Psoas muscle (tissue), 8 donors: ENCODE measurements at regions of chr6 and their contacts with region 1.

Region 1: GRCh38 chr6:30672445-30673253 is at the start of gene DHX16:
- DNase-seq: peak; percentile 97
- ATAC-seq: peak; percentile 88 to 94 (median 90)
- H3K4me3 ChIP-seq: peak within 1 kb of the TSS; percentile 97
- H3K27ac ChIP-seq: peak within 1 kb of the TSS; percentile 78
- H3K4me1 ChIP-seq: peaks cover 13% of the 10 kb centered on the region
- H3K27me3 ChIP-seq: no peaks in the 10 kb centered on the region
- CTCF ChIP-seq: peak; percentile 85
- total RNA-seq, gene DHX16: 26.6 to 45.4 (median 35.7) TPM

Region 2: DNA sequence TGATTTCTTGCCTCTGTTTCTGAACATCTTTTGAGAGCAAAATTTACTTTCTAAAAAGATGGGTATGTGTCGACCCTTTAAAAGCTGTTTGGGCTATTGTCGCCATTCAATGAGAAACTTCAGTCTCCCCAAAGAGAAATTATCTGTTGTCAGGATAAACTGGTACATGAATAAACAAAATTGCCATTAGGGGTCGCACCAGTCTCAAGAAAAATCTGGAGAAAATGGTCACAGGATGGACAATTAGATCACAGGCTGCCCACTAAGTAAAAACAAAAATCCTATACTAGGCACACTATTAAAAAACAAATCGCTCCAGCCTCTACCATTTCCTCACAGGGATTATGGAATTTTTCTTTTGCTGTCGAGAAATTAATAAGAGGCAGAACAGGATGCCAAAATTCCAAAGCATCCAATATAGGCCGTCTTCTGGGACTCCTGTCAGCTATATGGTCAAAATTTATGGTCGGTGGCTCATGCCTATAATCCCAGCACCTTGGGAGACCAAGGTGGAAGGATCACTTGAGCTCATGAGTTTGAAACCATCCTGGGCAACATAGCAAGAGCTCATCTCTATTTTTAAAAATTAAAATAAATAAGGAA is 188.9 kb before region 1 on chr6:
- intact Hi-C with region 1: loop called in 1 of 2 experiments (anchors 5 kb)
- DNase-seq: no peak
- ATAC-seq: no peak
- H3K4me3 ChIP-seq: no peak overlapping the region
- H3K27ac ChIP-seq: no peak overlapping the region
- H3K4me1 ChIP-seq: no peaks in the 10 kb centered on the region
- H3K27me3 ChIP-seq: peaks cover 5 to 67% (median 10%) of the 10 kb centered on the region in 3 donors
- CTCF ChIP-seq: peak; percentile 39

Region 3: DNA sequence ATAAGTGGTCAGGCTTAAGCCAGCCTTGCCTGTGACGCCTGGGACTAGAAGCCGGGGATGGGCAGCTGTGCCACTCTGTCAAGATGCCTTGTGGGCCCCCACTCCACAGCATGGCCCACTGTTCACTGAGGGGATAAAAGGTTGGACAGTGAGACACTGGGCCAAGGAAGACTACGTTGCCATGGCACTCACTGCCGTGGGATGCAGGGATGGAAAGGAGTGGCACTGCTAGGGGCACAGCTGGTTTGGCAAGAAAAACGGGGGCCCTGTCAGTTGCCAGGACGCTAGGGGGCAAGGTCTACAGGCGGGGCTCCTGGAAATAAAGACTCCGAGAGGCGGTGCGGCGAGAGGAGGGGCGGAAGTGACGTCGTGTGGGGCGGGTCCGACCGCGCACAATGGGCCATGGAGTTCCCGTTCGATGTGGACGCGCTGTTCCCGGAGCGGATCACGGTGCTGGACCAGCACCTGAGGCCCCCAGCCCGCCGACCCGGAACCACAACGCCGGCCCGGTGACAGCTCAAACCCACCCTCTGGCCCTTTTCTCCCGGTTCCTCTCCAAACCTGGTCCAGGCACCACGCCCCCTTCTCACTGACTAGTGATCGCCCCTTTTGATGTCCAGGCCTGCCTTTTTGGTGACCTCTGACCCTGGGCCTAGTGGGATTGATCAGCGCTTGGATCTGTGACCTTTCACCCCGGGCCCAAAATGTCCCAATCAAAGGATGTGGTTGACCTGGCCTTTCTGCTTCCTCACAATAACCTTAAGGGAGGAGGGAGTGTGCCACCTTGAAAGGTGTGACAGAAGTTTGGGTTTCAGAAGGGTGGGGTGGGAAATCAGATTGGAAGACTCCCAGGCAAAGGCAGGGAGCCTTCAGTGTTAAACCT is 45.9 kb before region 1 on chr6 and contains the start of gene ATAT1:
- intact Hi-C with region 1: loop called in 1 of 2 experiments (anchors 5 kb)
- DNase-seq: peak; percentile 89 to 94
- ATAC-seq: peak; percentile 94 to 96 (median 94)
- H3K4me3 ChIP-seq: peak within 1 kb of the TSS; percentile 68
- H3K27ac ChIP-seq: peak within 1 kb of the TSS; percentile 85
- H3K4me1 ChIP-seq: peaks cover 7% of the 10 kb centered on the region
- H3K27me3 ChIP-seq: no peaks in the 10 kb centered on the region
- CTCF ChIP-seq: peak; percentile 24
- total RNA-seq, gene ATAT1: 2.1 to 5.2 (median 2.9) TPM

Region 4: DNA sequence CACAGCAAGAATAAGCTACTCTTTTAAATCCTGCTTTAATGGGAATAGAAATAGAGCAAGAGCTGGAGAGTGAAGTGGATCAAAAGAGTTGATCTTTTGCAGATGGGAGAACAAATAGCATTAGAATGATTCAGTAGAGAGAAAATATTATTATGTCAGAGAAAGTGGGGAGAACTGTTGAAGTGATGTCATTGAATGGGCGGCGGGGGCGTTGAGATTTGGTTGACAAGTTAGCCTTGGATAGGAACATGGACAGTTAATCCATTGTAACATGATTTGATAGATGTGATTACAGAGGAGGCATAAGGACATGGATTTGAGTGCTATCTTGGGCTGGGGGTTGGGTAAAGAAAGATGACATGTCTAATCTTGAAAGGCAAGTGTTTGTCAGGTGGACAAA is 36.8 kb before region 1 on chr6:
- intact Hi-C with region 1: loop called in 1 of 2 experiments (anchors 5 kb)
- DNase-seq: no peak
- ATAC-seq: peak in 2 of 4 donors; percentile 27 to 42
- H3K4me3 ChIP-seq: no peak overlapping the region
- H3K27ac ChIP-seq: no peak overlapping the region
- H3K4me1 ChIP-seq: no peaks in the 10 kb centered on the region
- H3K27me3 ChIP-seq: no peaks in the 10 kb centered on the region
- CTCF ChIP-seq: no peak